Activated CD4-positive, alpha-beta memory T cell treated with anti-CD3 and anti-CD28 coated beads, Interleukin-2, amount 10 ng/mL, durations not matched to agents 7 days and 5 days (primary cell): ENCODE measurements at regions of chr17 and their contacts with region 1.

Region 1: GRCh38 chr17:19284005-19284959 is 47.1 kb downstream of the EPN2 start:
- DNase-seq: no peak
- H3K4me3 Mint-ChIP-seq: no peak overlapping the region
- H3K27ac Mint-ChIP-seq: peak overlapping the region; percentile 94
- H3K4me1 Mint-ChIP-seq: peaks cover 36% of the 10 kb centered on the region
- H3K27me3 Mint-ChIP-seq: peaks cover under 1% of the 10 kb centered on the region

Region 2: GRCh38 chr17:19306160-19307111 is 22.2 kb after region 1 on chr17:
- CTCF ChIA-PET with region 1: interaction called, 3 read pairs
- POLR2A ChIA-PET with region 1: interaction called, 14 read pairs
- DNase-seq: peak; percentile 47
- H3K4me3 Mint-ChIP-seq: peak overlapping the region; percentile 10
- H3K27ac Mint-ChIP-seq: peak overlapping the region; percentile 37
- H3K4me1 Mint-ChIP-seq: peaks cover 42% of the 10 kb centered on the region
- H3K27me3 Mint-ChIP-seq: peaks cover 12% of the 10 kb centered on the region